Activated CD4-positive, alpha-beta memory T cell treated with anti-CD3 and anti-CD28 coated beads for 36 hours (primary cell): ENCODE measurements at regions of chr4 and their contacts with region 1.

Region 1: DNA sequence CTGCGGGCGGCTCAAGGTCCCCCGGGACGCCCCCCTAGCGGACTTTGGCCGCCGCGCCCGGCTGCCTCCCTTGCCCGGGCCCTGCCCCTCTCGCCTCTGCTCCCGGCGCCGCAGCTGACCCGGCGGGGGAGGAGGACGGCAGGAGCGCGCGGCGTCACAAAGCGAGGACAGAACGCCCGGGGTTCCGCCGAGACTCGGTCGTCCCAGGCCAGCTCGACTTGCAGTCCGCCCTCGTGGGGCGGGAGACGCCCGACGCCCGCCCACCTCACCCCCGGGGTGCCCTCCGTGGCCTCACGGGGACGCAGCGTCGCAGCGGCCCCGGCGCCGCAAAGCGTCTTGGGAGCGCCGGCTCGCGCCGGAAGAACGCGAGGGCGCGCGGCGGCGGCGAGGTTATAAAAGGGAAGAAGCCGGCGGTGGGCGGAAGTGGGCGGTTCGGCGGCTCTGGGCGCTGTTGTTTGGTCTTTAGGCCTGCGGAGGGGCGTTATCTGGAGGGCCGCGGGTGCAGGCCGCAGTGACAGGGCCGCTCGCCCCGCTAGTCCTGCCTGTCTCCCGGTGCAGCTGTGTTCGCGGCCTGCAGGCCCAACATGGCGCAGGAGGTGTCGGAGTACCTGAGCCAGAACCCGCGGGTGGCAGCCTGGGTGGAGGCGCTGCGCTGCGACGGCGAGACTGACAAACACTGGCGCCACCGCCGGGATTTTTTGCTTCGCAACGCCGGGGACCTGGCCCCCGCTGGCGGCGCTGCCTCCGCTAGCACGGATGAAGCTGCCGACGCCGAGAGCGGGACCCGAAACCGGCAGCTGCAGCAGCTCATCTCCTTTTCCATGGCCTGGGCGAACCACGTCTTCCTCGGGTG is at the start of gene CDKN2AIP:
- DNase-seq: peak; percentile 95
- H3K4me3 Mint-ChIP-seq: peak within 1 kb of the TSS; percentile 96
- H3K27ac Mint-ChIP-seq: peak within 1 kb of the TSS; percentile 98
- H3K4me1 Mint-ChIP-seq: peaks cover 41% of the 10 kb centered on the region
- H3K27me3 Mint-ChIP-seq: no peaks in the 10 kb centered on the region
- total RNA-seq, gene CDKN2AIP: 23.0 to 23.7 TPM

Region 2: DNA sequence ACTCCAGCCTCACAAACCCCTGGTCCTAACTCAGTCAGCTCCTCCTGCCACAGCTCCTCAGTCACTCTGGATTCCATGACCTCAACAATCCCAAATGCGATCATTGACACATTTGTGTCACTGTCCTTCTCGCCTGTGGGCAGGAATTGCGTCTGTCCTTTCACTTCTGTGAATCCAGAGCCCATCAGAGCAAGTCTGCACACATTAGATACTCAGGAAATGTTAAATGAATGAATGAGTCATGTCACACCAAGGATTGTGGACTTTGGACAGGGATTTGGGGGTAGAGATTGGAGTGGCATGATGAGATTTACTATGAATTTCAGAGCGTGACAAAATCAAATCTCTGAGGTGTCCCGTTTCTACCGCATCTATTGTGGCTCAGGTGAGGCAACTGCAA is 110.5 kb before region 1 on chr4:
- CTCF ChIA-PET with region 1: no interaction called
- POLR2A ChIA-PET with region 1: no interaction called
- intact Hi-C with region 1: no loop called
- DNase-seq: no peak
- H3K4me3 Mint-ChIP-seq: no peak overlapping the region
- H3K27ac Mint-ChIP-seq: no peak overlapping the region
- H3K4me1 Mint-ChIP-seq: peaks cover 5% of the 10 kb centered on the region
- H3K27me3 Mint-ChIP-seq: peaks cover 11% of the 10 kb centered on the region

Region 3: DNA sequence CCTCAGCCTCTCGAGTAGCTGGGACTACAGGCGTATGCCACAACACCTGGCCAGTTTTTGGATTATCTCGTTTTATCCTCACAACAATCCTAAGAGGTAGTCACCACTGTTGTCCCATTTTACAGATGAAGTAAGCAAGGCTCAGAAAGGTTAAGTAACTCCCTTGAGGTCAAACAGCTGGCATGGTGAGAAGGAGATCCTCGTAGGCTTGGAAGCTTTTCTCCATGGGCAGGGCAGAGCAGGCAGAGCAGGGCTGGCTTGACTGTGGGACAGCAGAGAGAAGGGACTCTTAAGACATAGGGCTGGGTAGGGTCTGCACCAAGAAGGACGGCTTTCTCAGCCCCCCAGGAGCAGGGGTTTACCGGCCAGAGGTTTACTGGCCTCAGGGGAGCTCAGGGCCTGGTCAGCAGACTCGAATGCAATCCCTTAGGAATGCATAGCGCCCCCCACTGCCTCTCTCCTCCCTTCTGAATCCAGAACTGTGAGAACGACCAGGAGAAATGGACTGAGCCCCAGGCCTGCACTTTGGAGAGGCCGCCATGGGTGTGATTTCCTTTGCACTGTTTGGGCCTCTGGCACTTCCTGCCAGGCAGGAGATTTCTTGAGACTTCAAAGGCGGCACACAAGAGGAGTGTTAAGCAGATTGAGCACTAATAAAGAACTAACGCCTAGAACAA is 14.0 kb before region 1 on chr4:
- CTCF ChIA-PET with region 1: interaction called, 5 read pairs
- POLR2A ChIA-PET with region 1: interaction called, 10 read pairs
- intact Hi-C with region 1: loop called (anchors 1 kb)
- DNase-seq: peak; percentile 44
- H3K4me3 Mint-ChIP-seq: peak overlapping the region; percentile 31
- H3K27ac Mint-ChIP-seq: peak overlapping the region; percentile 81
- H3K4me1 Mint-ChIP-seq: peaks cover 38% of the 10 kb centered on the region
- H3K27me3 Mint-ChIP-seq: no peaks in the 10 kb centered on the region

Region 4: DNA sequence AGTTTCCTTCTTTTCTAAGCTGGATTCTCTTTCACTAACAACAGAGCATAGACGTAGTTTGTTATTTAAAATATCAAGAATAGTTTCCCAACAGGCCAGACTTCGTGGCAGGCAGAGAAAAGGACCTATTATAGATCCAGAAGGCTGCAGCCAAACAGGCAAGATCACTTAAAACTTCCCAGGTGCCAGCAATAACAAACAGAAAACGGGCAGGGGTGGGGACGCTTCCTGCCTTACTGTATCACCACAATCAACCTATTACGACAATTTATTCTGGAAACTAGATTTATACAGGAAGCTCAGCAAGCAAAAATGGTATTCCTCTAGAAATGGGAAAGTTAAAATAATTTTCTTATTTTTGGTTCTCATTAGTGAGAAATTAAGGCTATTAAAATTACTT is 192.5 kb after region 1 on chr4:
- CTCF ChIA-PET with region 1: no interaction called
- POLR2A ChIA-PET with region 1: no interaction called
- intact Hi-C with region 1: loop called (anchors 1 kb)
- DNase-seq: no peak
- H3K4me3 Mint-ChIP-seq: no peak overlapping the region
- H3K27ac Mint-ChIP-seq: no peak overlapping the region
- H3K4me1 Mint-ChIP-seq: peaks cover 18% of the 10 kb centered on the region
- H3K27me3 Mint-ChIP-seq: peaks cover 6% of the 10 kb centered on the region

Region 5: GRCh38 chr4:183659029-183659871 is 214.8 kb after region 1 on chr4 and contains the starts of genes RWDD4 and TRAPPC11:
- CTCF ChIA-PET with region 1: no interaction called
- POLR2A ChIA-PET with region 1: interaction called, 6 read pairs
- intact Hi-C with region 1: loop called (anchors 1 kb)
- DNase-seq: peak; percentile 98
- H3K4me3 Mint-ChIP-seq: peak within 1 kb of the TSS; percentile 85
- H3K27ac Mint-ChIP-seq: peak within 1 kb of the TSS; percentile 80
- H3K4me1 Mint-ChIP-seq: peaks cover 35% of the 10 kb centered on the region
- H3K27me3 Mint-ChIP-seq: no peaks in the 10 kb centered on the region
- total RNA-seq, gene RWDD4: 19.4 to 19.8 TPM
- total RNA-seq, gene TRAPPC11: 29.7 to 30.2 TPM